Breast epithelium (tissue), 4 donors: ENCODE measurements at regions of chr4 and their contacts with region 1.

Region 1: DNA sequence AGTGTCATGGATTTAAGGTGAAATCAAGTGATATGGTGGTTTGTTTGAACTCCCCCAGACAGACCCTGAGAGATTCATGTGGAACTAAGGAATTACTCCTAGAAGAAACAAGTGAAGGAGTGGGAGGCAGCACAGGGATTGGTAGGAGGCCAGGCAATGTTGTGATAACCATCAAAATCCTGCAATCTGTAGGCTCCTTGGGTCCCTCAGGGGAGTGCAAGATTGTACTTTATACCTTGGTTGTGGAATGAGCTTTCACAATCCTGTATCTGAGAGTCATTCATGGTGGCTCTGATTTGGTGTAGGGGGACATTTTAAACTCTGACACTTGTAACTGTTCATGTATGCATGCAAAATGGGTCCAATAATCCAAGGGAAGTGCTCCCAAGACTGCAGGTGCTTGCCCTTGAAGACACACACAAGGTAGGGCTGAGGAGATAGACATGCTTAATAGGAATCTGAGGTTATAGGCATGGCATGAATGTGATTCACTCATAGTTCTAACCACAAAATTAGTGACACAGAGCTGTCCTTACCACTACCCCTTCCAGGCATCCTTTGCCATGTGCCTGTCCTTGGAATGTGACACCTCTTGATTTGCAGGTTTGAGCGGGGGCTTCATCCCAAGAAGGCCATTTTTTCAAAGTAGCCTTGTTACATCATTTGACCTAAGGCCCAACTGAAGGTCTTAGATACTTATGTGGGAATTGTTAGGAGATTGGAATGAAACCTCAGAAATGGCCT is 112.3 kb downstream of the CCNG2 start:
- DNase-seq: no peak
- H3K4me3 ChIP-seq: no peak overlapping the region
- H3K27ac ChIP-seq: no peak overlapping the region
- H3K4me1 ChIP-seq: no peaks in the 10 kb centered on the region
- H3K27me3 ChIP-seq: no peaks in the 10 kb centered on the region
- CTCF ChIP-seq: no peak
- POLR2A ChIP-seq: no peak

Region 2: GRCh38 chr4:76326515-76326914 is 942.8 kb before region 1 on chr4:
- intact Hi-C with region 1: no loop called
- DNase-seq: no peak
- H3K4me3 ChIP-seq: no peak overlapping the region
- H3K27ac ChIP-seq: no peak overlapping the region
- H3K4me1 ChIP-seq: no peaks in the 10 kb centered on the region
- H3K27me3 ChIP-seq: no peaks in the 10 kb centered on the region
- CTCF ChIP-seq: no peak
- POLR2A ChIP-seq: no peak

Region 3: GRCh38 chr4:77240469-77241066 is 28.8 kb before region 1 on chr4:
- intact Hi-C with region 1: loop called (anchors 1 kb)
- DNase-seq: peak in 1 of 2 donors; percentile 54
- H3K4me3 ChIP-seq: no peak overlapping the region
- H3K27ac ChIP-seq: no peak overlapping the region
- H3K4me1 ChIP-seq: no peaks in the 10 kb centered on the region
- H3K27me3 ChIP-seq: no peaks in the 10 kb centered on the region
- CTCF ChIP-seq: peak in 2 of 3 donors; percentile 52 to 53
- POLR2A ChIP-seq: no peak